IMR-90 (cell line): ENCODE measurements at regions of chr7 and their contacts with region 1.

Region 1: DNA sequence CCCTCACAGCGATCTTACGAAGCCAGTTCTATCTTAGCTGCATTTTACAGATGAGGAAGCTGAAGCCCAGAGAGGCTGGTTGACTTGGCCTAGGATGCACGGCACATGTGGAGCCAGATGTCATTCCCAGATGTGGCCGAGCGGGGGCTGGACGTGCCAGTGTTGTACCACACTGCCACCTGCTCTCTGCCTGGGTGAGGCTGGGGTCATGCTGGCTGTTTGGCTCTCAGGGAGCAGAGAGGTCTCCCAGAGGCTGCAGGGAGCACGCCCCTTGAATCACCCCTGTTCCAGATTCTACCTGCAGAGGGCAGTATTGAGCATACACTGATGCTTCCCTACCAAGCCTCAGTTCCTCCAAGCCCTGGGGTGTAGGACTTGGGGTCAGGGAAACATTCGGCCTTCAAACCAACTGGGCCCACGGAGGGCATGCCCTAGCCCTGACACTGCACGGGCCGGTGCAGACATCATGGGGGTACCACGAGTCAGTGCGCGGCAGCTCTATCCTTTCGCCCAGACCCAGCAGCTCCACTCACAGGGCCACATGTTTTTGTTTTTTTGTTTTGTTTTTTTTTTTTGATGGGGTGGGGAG is 3.8 kb upstream of the GTF2IRD1 start:
- DNase-seq: peak; percentile 43
- ATAC-seq: peak; percentile 41
- H3K4me3 ChIP-seq: no peak overlapping the region
- H3K27ac ChIP-seq: no peak overlapping the region
- H3K4me1 ChIP-seq: peaks cover 10% of the 10 kb centered on the region
- H3K27me3 ChIP-seq: no peaks in the 10 kb centered on the region; the same call in 1 of the 2 replicates
- CTCF ChIP-seq: peak; percentile 68
- POLR2A ChIP-seq: no peak
- RAD21 ChIP-seq: peak; percentile 69

Region 2: GRCh38 chr7:74334030-74334429 is 115.9 kb before region 1 on chr7:
- CTCF ChIA-PET with region 1: no interaction called
- POLR2A ChIA-PET with region 1: no interaction called
- dilution Hi-C with region 1: no loop called
- in situ Hi-C with region 1: no loop called
- intact Hi-C with region 1: no loop called
- DNase-seq: peak; percentile 94
- ATAC-seq: peak; percentile 81
- H3K4me3 ChIP-seq: no peak overlapping the region
- H3K27ac ChIP-seq: peak overlapping the region; percentile 12; the same call in 1 of the 2 replicates
- H3K4me1 ChIP-seq: peaks cover 7% of the 10 kb centered on the region; the same call in 1 of the 2 replicates
- H3K27me3 ChIP-seq: no peaks in the 10 kb centered on the region
- CTCF ChIP-seq: no peak
- POLR2A ChIP-seq: no peak
- RAD21 ChIP-seq: peak; percentile 20; the same call in 1 of the 2 replicates

Region 3: GRCh38 chr7:74495112-74496086 is 45.5 kb after region 1 on chr7:
- CTCF ChIA-PET with region 1: no interaction called
- POLR2A ChIA-PET with region 1: no interaction called
- dilution Hi-C with region 1: no loop called
- in situ Hi-C with region 1: no loop called
- intact Hi-C with region 1: no loop called
- DNase-seq: no peak
- ATAC-seq: no peak
- H3K4me3 ChIP-seq: no peak overlapping the region
- H3K27ac ChIP-seq: no peak overlapping the region
- H3K4me1 ChIP-seq: no peaks in the 10 kb centered on the region
- H3K27me3 ChIP-seq: no peaks in the 10 kb centered on the region
- CTCF ChIP-seq: no peak
- POLR2A ChIP-seq: no peak
- RAD21 ChIP-seq: no peak

Region 4: DNA sequence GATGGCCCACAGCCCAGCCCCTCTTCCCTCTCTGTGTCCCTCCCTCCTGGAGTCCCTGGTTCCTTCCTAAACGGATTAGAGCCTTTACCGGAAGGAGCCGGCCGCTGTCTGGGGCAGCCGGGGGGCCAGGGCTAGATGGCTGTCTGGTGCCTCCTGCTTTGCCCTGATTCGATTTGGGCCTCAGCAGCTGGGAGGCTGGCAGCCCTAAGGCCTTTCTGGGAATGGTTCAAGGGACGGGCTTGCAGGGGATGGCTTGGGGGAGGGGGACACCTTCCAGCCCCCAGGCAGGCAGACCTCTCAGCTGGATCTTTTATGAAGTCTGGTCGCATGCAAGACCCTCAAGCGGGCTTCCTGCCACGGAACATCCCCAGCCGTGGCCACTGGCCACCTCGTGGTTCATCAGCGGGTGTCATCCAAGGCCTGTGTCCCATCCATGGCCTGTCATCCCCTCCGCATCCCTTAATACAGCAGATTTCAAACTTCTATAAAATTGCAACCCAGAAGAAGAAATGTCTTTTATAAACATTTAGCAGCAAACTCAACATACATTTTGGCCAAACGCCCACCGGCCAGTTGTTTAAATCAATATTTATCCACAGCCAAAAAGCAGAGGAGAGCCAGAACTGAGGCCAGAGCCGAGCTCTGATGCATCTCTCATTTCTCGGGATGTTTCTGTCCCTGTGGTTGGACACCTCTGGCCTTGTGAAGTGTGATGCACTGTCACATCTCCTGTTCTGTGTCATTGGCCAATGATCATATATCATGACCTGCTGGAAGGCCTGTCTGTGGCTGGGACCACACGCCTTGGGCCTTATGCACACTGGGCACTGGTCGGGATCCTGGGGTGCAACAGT is 55.8 kb after region 1 on chr7:
- CTCF ChIA-PET with region 1: no interaction called
- POLR2A ChIA-PET with region 1: no interaction called
- dilution Hi-C with region 1: no loop called
- in situ Hi-C with region 1: no loop called
- intact Hi-C with region 1: loop called (anchors 2 kb)
- DNase-seq: peak; percentile 74
- ATAC-seq: peak; percentile 88
- H3K4me3 ChIP-seq: no peak overlapping the region
- H3K27ac ChIP-seq: peak overlapping the region; percentile 55; the same call in 1 of the 2 replicates
- H3K4me1 ChIP-seq: peaks cover 18% of the 10 kb centered on the region
- H3K27me3 ChIP-seq: no peaks in the 10 kb centered on the region
- CTCF ChIP-seq: no peak
- POLR2A ChIP-seq: no peak
- RAD21 ChIP-seq: no peak

Region 5: GRCh38 chr7:74544706-74545469 is 95.0 kb after region 1 on chr7:
- CTCF ChIA-PET with region 1: no interaction called
- POLR2A ChIA-PET with region 1: no interaction called
- dilution Hi-C with region 1: no loop called
- in situ Hi-C with region 1: no loop called
- intact Hi-C with region 1: loop called (anchors 5 kb)
- DNase-seq: peak; percentile 64
- ATAC-seq: peak; percentile 88
- H3K4me3 ChIP-seq: no peak overlapping the region
- H3K27ac ChIP-seq: no peak overlapping the region
- H3K4me1 ChIP-seq: no peaks in the 10 kb centered on the region
- H3K27me3 ChIP-seq: no peaks in the 10 kb centered on the region
- CTCF ChIP-seq: peak; percentile 67
- POLR2A ChIP-seq: no peak
- RAD21 ChIP-seq: peak; percentile 70

Region 6: GRCh38 chr7:74569501-74570075 is 119.7 kb after region 1 on chr7:
- CTCF ChIA-PET with region 1: interaction called, 4 read pairs
- POLR2A ChIA-PET with region 1: no interaction called
- dilution Hi-C with region 1: no loop called
- in situ Hi-C with region 1: no loop called
- intact Hi-C with region 1: loop called (anchors 2 kb)
- DNase-seq: no peak
- ATAC-seq: no peak
- H3K4me3 ChIP-seq: no peak overlapping the region
- H3K27ac ChIP-seq: no peak overlapping the region
- H3K4me1 ChIP-seq: no peaks in the 10 kb centered on the region
- H3K27me3 ChIP-seq: no peaks in the 10 kb centered on the region
- CTCF ChIP-seq: no peak
- POLR2A ChIP-seq: no peak
- RAD21 ChIP-seq: no peak